ENCODE measurements at regions of chr7 and their contacts with region 1.

Region 1: GRCh38 chr7:92447345-92448204 is at the start of gene GATAD1:
- DNase-seq: peak; percentile 46
- H3K4me3 ChIP-seq: peak within 1 kb of the TSS; percentile 67
- H3K27me3 ChIP-seq: no peaks in the 10 kb centered on the region
- CTCF ChIP-seq: peak; percentile 90
- polyA plus RNA-seq, gene GATAD1: 17.4 and 27.0 TPM in 2 replicates

Region 2: GRCh38 chr7:91835846-91836368 is 611.7 kb before region 1 on chr7:
- CTCF ChIA-PET with region 1: interaction called, 33 read pairs
- POLR2A ChIA-PET with region 1: no interaction called
- DNase-seq: no peak
- H3K4me3 ChIP-seq: no peak overlapping the region
- H3K27me3 ChIP-seq: no peaks in the 10 kb centered on the region
- CTCF ChIP-seq: no peak

Region 3: DNA sequence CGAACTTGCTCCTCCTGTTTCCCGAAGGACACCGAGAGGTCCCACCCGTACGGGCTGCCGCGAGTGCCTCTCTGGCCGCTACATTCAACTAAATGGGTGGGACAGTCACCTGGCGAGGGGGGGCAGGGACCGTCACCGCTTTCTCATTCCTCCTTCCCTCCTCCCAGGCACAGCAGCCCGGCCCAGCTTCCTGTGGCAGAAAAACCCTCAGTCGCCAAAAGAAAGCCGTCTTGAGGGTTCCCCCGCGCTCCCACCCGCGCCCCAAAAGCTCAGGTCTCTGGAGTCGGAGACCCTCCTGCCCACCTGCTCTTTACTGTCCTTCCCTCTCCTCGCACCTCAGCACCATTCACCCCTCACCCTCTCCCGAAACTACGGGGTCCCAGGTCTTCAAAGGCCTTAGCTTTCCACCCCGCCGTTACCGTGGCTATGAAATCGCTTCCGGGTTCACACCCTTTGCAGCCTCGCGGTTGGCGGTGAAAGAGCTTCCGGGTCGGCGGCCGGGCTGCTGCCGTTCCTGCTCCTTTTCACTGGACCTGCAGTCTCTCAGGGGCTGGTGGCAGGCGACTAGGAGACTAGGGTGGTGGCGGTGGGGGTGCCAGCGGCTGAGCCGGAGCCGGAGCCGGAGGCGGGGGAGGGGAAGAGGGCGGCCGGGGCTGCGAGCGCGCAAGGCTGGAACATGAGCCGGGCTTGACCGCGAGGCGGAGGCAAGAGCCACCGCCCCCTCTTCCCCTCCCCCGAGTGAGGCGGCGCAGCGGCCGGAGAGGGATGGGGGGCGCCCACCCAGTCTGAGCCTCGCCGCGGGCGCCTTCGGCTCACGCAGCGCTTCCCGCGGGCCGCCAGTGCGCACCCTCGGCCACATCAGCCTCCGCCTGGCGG is 201.8 kb before region 1 on chr7 and contains the starts of genes ANKIB1 and KRIT1:
- CTCF ChIA-PET with region 1: interaction called, 17 read pairs
- POLR2A ChIA-PET with region 1: no interaction called
- DNase-seq: peak; percentile 32
- H3K4me3 ChIP-seq: peak within 1 kb of the TSS; percentile 74
- H3K27me3 ChIP-seq: no peaks in the 10 kb centered on the region
- CTCF ChIP-seq: no peak
- polyA plus RNA-seq, gene ANKIB1: 35.0 and 45.1 TPM in 2 replicates
- polyA plus RNA-seq, gene KRIT1: 23.7 and 35.8 TPM in 2 replicates

Region 4: GRCh38 chr7:92417913-92418312 is 29.7 kb before region 1 on chr7:
- CTCF ChIA-PET with region 1: interaction called, 20 read pairs
- POLR2A ChIA-PET with region 1: no interaction called
- DNase-seq: no peak
- H3K4me3 ChIP-seq: no peak overlapping the region
- H3K27me3 ChIP-seq: peaks cover 6% of the 10 kb centered on the region
- CTCF ChIP-seq: no peak

Region 5: GRCh38 chr7:92461027-92462003 is 13.7 kb after region 1 on chr7:
- CTCF ChIA-PET with region 1: interaction called, 37 read pairs
- POLR2A ChIA-PET with region 1: no interaction called
- DNase-seq: no peak
- H3K4me3 ChIP-seq: no peak overlapping the region
- H3K27me3 ChIP-seq: no peaks in the 10 kb centered on the region
- CTCF ChIP-seq: peak; percentile 76

Measured in BJ (cell line).